ENCODE measurements at regions of chr1 and their contacts with region 1.

Region 1: GRCh38 chr1:211643324-211644212 is 31.9 kb downstream of the NEK2 start:
- DNase-seq: peak; percentile 96
- ATAC-seq: peak; percentile 75
- H3K4me3 ChIP-seq: peak overlapping the region; percentile 5 to 64 (median 53); a peak in 5 of 6 replicates
- H3K27ac ChIP-seq: peak overlapping the region; percentile 26
- H3K4me1 ChIP-seq: peaks cover 85% of the 10 kb centered on the region
- H3K27me3 ChIP-seq: no peaks in the 10 kb centered on the region
- CTCF ChIP-seq: 0 out of 2 replicates have a peak, but pooled peaks have one; percentile 18
- EP300 ChIP-seq: peak in 1 of 2 experiments; percentile 93; a peak in 2 of 4 replicates
- POLR2A ChIP-seq: no peak
- RAD21 ChIP-seq: 0 out of 2 replicates have a peak, but pooled peaks have one; percentile 12

Region 2: GRCh38 chr1:211613093-211613947 is 30.2 kb before region 1 on chr1:
- CTCF ChIA-PET with region 1: no interaction called
- POLR2A ChIA-PET with region 1: interaction called, 100 read pairs
- in situ Hi-C with region 1: no loop called
- intact Hi-C with region 1: no loop called
- DNase-seq: peak; percentile 55
- ATAC-seq: peak; percentile 8; the same call in 1 of the 3 replicates
- H3K4me3 ChIP-seq: no peak overlapping the region
- H3K27ac ChIP-seq: no peak overlapping the region
- H3K4me1 ChIP-seq: peaks cover 85% of the 10 kb centered on the region
- H3K27me3 ChIP-seq: no peaks in the 10 kb centered on the region
- CTCF ChIP-seq: no peak
- EP300 ChIP-seq: no peak
- POLR2A ChIP-seq: no peak
- RAD21 ChIP-seq: no peak

Region 3: DNA sequence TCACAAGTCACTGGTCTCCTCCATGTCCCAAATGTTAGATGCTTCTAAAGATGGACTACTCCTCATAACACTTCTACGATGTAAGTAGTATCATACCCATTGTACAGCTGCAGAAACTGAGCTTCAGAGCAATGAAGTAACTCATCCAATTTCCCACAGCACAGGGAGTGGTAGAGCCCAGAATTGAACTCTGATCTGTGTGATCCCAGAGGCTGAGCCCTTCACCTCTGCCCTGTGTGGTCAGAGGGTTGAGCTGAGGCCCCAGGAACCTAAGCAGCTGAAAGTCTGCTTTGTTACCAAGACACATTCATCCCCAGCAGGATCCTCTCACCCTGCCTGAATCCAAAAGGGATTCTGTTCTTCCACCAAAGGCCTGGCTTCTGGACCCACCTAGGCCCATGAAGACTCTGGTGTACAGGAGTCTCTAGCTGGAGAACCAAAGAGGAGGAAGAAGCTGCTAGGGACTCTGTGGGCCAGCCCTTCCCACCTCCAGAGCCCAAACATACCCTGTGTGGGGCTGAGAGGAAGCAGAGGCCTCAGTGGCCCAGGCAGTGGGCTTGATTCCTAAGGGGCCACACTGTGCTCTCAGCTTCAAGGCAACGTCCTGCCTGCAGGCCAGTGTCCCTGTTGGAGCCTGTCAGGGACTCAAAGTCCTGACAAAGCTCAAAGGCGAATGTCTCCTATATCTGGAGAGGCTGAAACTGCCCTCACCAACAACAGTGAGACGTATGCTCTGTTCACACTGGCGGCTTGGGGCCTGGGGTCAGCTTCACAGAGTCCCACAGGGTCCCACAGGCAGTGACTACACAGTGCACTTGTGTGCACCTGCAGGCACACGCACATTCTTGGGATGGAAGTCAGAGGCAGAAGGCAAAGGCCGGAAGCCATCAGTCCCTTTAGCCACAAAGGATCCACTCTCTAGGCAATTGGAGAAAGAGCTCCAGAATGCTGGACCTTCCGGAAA is 24.3 kb before region 1 on chr1:
- CTCF ChIA-PET with region 1: no interaction called
- POLR2A ChIA-PET with region 1: interaction called, 100 read pairs
- in situ Hi-C with region 1: no loop called
- intact Hi-C with region 1: no loop called
- DNase-seq: peak; percentile 75
- ATAC-seq: peak; percentile 78
- H3K4me3 ChIP-seq: peak overlapping the region in 1 of 3 experiments; percentile 51; a peak in 2 of 6 replicates
- H3K27ac ChIP-seq: peak overlapping the region; percentile 50
- H3K4me1 ChIP-seq: peaks cover 72% of the 10 kb centered on the region
- H3K27me3 ChIP-seq: peaks cover 0 to 2% of the 10 kb centered on the region in 2 experiments; a peak in 1 of 5 replicates
- CTCF ChIP-seq: 0 out of 2 replicates have a peak, but pooled peaks have one; percentile 6
- EP300 ChIP-seq: peak; percentile 65; a peak in 2 of 4 replicates
- POLR2A ChIP-seq: no peak
- RAD21 ChIP-seq: no peak

Region 4: GRCh38 chr1:211630236-211631081 is 13.1 kb before region 1 on chr1:
- CTCF ChIA-PET with region 1: interaction called, 4 read pairs
- POLR2A ChIA-PET with region 1: interaction called, 11 read pairs
- in situ Hi-C with region 1: no loop called
- intact Hi-C with region 1: loop called (anchors 1 kb)
- DNase-seq: peak; percentile 83
- ATAC-seq: peak; percentile 94
- H3K4me3 ChIP-seq: peak overlapping the region; percentile 31 to 63 (median 47); a peak in 4 of 6 replicates
- H3K27ac ChIP-seq: no peak overlapping the region
- H3K4me1 ChIP-seq: peaks cover 45% of the 10 kb centered on the region
- H3K27me3 ChIP-seq: peaks cover 0 to 1% of the 10 kb centered on the region in 2 experiments; a peak in 1 of 5 replicates
- CTCF ChIP-seq: peak; percentile 70
- EP300 ChIP-seq: no peak
- POLR2A ChIP-seq: no peak
- RAD21 ChIP-seq: no peak